ENCODE measurements at regions of chr17 and their contacts with region 1.

Region 1: GRCh38 chr17:6666077-6666521 is 14.5 kb downstream of the C17orf100 start:
- DNase-seq: peak; percentile 59 to 96 (median 77)

Region 2: GRCh38 chr17:6831661-6832263 is 165.7 kb after region 1 on chr17 and contains the start of gene TEKT1:
- intact Hi-C with region 1: loop called (anchors 10 kb)
- DNase-seq: peak; percentile 52 to 95 (median 77)

Region 3: GRCh38 chr17:6959700-6960099 is 293.6 kb after region 1 on chr17:
- intact Hi-C with region 1: no loop called
- DNase-seq: no peak